ENCODE measurements at regions of chr7 and their contacts with region 1.

Region 1: GRCh38 chr7:151876899-151877777 is at the start of gene PRKAG2:
- DNase-seq: peak; percentile 58 to 81 (median 76)
- ATAC-seq: peak; percentile 65
- H3K4me3 ChIP-seq: peak within 1 kb of the TSS; percentile 99
- H3K4me3 Mint-ChIP-seq: peak within 1 kb of the TSS; percentile 93 to 98 (median 96)
- H3K27ac ChIP-seq: peak within 1 kb of the TSS; percentile 87
- H3K27ac Mint-ChIP-seq: peak within 1 kb of the TSS; percentile 84 to 96 (median 91)
- H3K4me1 ChIP-seq: peaks cover 7 to 15% of the 10 kb centered on the region in 2 donors
- H3K4me1 Mint-ChIP-seq: peaks cover 6 to 33% (median 20%) of the 10 kb centered on the region in 7 donors
- H3K27me3 ChIP-seq: no peaks in the 10 kb centered on the region
- H3K27me3 Mint-ChIP-seq: peaks cover 0 to 41% (median 0%) of the 10 kb centered on the region in 5 donors
- total RNA-seq, gene PRKAG2: 15.0 to 74.4 (median 66.1) TPM

Region 2: DNA sequence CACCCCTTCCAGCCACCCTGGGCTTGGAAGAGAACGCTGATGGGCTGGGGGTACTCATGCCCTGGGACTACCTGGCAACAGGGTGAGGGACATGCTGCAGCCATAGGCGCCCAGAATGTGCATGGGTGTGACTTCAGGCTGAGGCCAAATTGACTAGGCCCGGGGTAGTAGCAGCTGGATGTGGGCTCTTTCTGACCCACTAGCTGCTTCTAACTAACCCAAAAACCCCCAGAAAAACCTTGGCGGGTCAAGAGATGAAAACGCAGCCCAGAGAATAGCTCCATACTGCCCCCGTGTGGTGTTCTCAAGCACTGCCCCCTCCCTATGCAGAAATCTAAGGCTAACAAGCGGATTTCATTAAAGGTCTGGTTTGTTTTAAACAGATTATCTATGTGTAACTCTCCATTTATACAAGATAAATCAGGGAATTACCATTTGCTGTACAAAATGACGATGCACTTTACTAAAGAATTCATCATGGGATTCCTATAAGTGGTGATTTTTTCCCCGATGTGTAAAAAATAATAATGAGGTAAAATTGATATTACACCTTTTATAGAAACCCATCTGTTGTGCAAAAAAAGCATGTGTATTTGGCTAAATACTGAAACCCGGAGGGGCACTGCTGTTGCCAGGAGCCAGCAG is 632.8 kb before region 1 on chr7:
- CTCF ChIA-PET with region 1: no interaction called
- POLR2A ChIA-PET with region 1: no interaction called
- intact Hi-C with region 1: loop called in 1 of 2 experiments (anchors 5 kb)
- DNase-seq: peak in 6 of 9 donors; percentile 44 to 63 (median 54)
- ATAC-seq: peak; percentile 52
- H3K4me3 ChIP-seq: peak overlapping the region; percentile 40
- H3K4me3 Mint-ChIP-seq: peak overlapping the region; percentile 71 to 93 (median 78)
- H3K27ac ChIP-seq: no peak overlapping the region
- H3K27ac Mint-ChIP-seq: peak overlapping the region in 6 of 9 donors; percentile 9 to 90 (median 68)
- H3K4me1 ChIP-seq: peaks cover 22 to 36% of the 10 kb centered on the region in 2 donors
- H3K4me1 Mint-ChIP-seq: peaks cover 27 to 53% (median 38%) of the 10 kb centered on the region in 7 donors
- H3K27me3 ChIP-seq: peaks cover 0 to under 1% of the 10 kb centered on the region in 2 donors
- H3K27me3 Mint-ChIP-seq: peaks cover 3 to 37% (median 21%) of the 10 kb centered on the region in 5 donors

Region 3: GRCh38 chr7:151658778-151659177 is 218.4 kb before region 1 on chr7:
- CTCF ChIA-PET with region 1: no interaction called
- POLR2A ChIA-PET with region 1: no interaction called
- intact Hi-C with region 1: no loop called
- DNase-seq: no peak
- ATAC-seq: no peak
- H3K4me3 ChIP-seq: no peak overlapping the region
- H3K4me3 Mint-ChIP-seq: no peak overlapping the region
- H3K27ac ChIP-seq: no peak overlapping the region
- H3K27ac Mint-ChIP-seq: no peak overlapping the region
- H3K4me1 ChIP-seq: no peaks in the 10 kb centered on the region
- H3K4me1 Mint-ChIP-seq: no peaks in the 10 kb centered on the region
- H3K27me3 ChIP-seq: no peaks in the 10 kb centered on the region
- H3K27me3 Mint-ChIP-seq: no peaks in the 10 kb centered on the region

Region 4: DNA sequence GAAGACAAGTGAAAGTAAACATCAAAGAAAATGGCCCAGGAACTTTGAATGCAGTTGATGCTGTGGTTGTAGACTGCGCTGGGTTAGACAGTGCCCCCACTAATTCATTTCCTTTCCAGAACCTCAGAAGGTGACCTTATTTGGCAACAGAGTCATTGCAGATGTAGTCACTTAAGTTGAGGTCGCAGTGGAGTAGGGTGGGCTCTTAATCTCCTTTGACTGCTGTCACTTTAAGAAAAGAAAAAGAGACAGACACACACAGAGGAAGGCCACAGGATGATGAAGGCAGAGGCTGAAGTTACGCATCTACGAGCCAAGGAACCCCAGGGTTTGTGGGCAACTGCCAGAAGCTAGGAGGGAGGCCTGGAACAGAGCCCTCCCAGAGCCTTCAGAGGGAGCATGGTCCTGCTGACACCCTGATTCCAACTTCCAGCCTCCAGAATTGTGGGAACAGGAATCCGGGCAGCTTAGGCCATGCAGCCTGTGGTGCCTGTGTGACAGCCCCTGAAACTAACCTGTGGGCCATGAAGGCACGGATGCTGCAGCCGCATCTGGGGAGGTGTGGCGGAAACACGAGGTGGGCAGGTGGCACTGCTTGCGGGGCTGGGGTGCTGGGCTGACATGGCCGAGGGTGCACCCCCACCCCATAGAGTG is 107.8 kb before region 1 on chr7:
- CTCF ChIA-PET with region 1: no interaction called
- POLR2A ChIA-PET with region 1: interaction called, 4 read pairs
- intact Hi-C with region 1: loop called in 1 of 2 experiments (anchors 5 kb)
- DNase-seq: peak in 7 of 9 donors; percentile 63 to 82 (median 74)
- ATAC-seq: peak; percentile 90
- H3K4me3 ChIP-seq: peak overlapping the region; percentile 52
- H3K4me3 Mint-ChIP-seq: peak overlapping the region; percentile 74 to 88 (median 81)
- H3K27ac ChIP-seq: peak overlapping the region; percentile 81
- H3K27ac Mint-ChIP-seq: peak overlapping the region; percentile 88 to 96 (median 93)
- H3K4me1 ChIP-seq: peaks cover 33 to 43% of the 10 kb centered on the region in 2 donors
- H3K4me1 Mint-ChIP-seq: peaks cover 37 to 86% (median 80%) of the 10 kb centered on the region in 7 donors
- H3K27me3 ChIP-seq: no peaks in the 10 kb centered on the region
- H3K27me3 Mint-ChIP-seq: no peaks in the 10 kb centered on the region

Region 5: GRCh38 chr7:151863386-151864079 is 13.6 kb before region 1 on chr7:
- CTCF ChIA-PET with region 1: interaction called, 3 read pairs
- POLR2A ChIA-PET with region 1: no interaction called
- intact Hi-C with region 1: loop called in 1 of 2 experiments (anchors 2 kb)
- DNase-seq: no peak
- ATAC-seq: peak; percentile 35
- H3K4me3 ChIP-seq: no peak overlapping the region
- H3K4me3 Mint-ChIP-seq: no peak overlapping the region
- H3K27ac ChIP-seq: no peak overlapping the region
- H3K27ac Mint-ChIP-seq: peak overlapping the region in 2 of 9 donors; percentile 41 to 51
- H3K4me1 ChIP-seq: no peaks in the 10 kb centered on the region
- H3K4me1 Mint-ChIP-seq: peaks cover 0 to 48% (median 42%) of the 10 kb centered on the region in 7 donors
- H3K27me3 ChIP-seq: no peaks in the 10 kb centered on the region
- H3K27me3 Mint-ChIP-seq: no peaks in the 10 kb centered on the region

Region 6: GRCh38 chr7:152025077-152025936 is 148.2 kb after region 1 on chr7 and contains the start of gene GALNT11:
- CTCF ChIA-PET with region 1: interaction called, 4 read pairs
- POLR2A ChIA-PET with region 1: interaction called, 8 read pairs
- intact Hi-C with region 1: loop called (anchors 1 to 2 kb)
- DNase-seq: peak; percentile 82 to 95 (median 91)
- ATAC-seq: peak; percentile 96
- H3K4me3 ChIP-seq: peak within 1 kb of the TSS; percentile 75
- H3K4me3 Mint-ChIP-seq: peak within 1 kb of the TSS; percentile 85 to 92 (median 88)
- H3K27ac ChIP-seq: peak within 1 kb of the TSS; percentile 88
- H3K27ac Mint-ChIP-seq: peak within 1 kb of the TSS; percentile 85 to 96 (median 95)
- H3K4me1 ChIP-seq: peaks cover 7 to 22% of the 10 kb centered on the region in 2 donors
- H3K4me1 Mint-ChIP-seq: peaks cover 12 to 45% (median 39%) of the 10 kb centered on the region in 7 donors
- H3K27me3 ChIP-seq: no peaks in the 10 kb centered on the region
- H3K27me3 Mint-ChIP-seq: peaks cover 0 to 11% (median 0%) of the 10 kb centered on the region in 5 donors
- total RNA-seq, gene GALNT11: 16.0 to 29.5 (median 17.9) TPM

Region 7: GRCh38 chr7:152759949-152760853 is 883.1 kb after region 1 on chr7:
- CTCF ChIA-PET with region 1: no interaction called
- POLR2A ChIA-PET with region 1: no interaction called
- intact Hi-C with region 1: loop called in 1 of 2 experiments (anchors 1 kb)
- DNase-seq: peak in 5 of 9 donors; percentile 12 to 53 (median 22)
- ATAC-seq: peak; percentile 26
- H3K4me3 ChIP-seq: peak overlapping the region; percentile 68
- H3K4me3 Mint-ChIP-seq: peak overlapping the region; percentile 85 to 94 (median 90)
- H3K27ac ChIP-seq: peak overlapping the region; percentile 93
- H3K27ac Mint-ChIP-seq: peak overlapping the region; percentile 63 to 97 (median 88)
- H3K4me1 ChIP-seq: peaks cover 6 to 11% of the 10 kb centered on the region in 2 donors
- H3K4me1 Mint-ChIP-seq: peaks cover 9 to 27% (median 20%) of the 10 kb centered on the region in 7 donors
- H3K27me3 ChIP-seq: no peaks in the 10 kb centered on the region
- H3K27me3 Mint-ChIP-seq: peaks cover 0 to 3% (median 0%) of the 10 kb centered on the region in 5 donors

Measured in naive thymus-derived CD4-positive, alpha-beta T cell (primary cell).